PC-9 (cell line): ENCODE measurements at regions of chr11 and their contacts with region 1.

Region 1: DNA sequence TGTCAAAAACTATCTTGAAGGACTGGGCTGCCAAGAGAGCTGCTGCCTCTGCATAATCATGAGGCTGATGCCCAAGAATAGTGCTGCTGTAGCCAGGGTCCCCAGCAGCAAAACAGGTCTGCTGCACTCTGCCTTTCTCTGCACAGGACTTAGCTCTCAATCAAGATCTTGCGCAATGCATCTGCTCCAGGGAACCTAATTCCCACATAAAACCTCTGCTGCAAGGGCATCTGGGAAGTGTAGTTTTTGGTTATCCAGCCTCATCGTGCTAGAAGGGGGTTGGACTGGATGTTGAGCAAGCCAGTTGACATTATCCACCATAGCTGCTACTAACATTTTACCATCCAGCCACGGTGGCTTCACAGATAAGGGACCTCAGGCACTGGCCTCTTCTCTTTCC is 192.7 kb downstream of the C11orf91 start:
- DNase-seq: peak; percentile 2 to 50
- H3K4me3 ChIP-seq: no peak overlapping the region
- H3K27ac ChIP-seq: no peak overlapping the region
- H3K4me1 ChIP-seq: no peaks in the 10 kb centered on the region
- H3K27me3 ChIP-seq: no peaks in the 10 kb centered on the region
- CTCF ChIP-seq: no peak

Region 2: DNA sequence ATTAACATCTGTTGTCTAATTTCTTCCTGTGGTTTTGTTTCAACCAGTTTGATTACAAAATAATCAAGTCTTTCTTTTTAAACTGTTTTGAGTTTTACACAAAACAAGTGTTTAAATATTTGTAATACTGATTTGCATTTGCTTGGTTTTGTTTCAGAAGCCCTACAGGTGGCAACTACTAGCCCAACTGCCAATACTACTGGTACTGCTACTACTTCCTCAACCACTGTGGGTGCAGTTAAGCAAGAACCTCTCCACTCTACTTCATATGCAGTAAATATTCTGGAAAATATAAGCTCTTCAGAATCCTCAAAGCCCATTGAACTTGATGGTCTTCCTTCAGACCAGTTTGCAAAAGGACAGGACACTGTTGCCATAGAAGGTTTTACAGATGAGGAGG is 554.3 kb before region 1 on chr11:
- CTCF ChIA-PET with region 1: no interaction called
- POLR2A ChIA-PET with region 1: no interaction called
- intact Hi-C with region 1: no loop called
- DNase-seq: no peak
- H3K4me3 ChIP-seq: no peak overlapping the region
- H3K27ac ChIP-seq: no peak overlapping the region
- H3K4me1 ChIP-seq: no peaks in the 10 kb centered on the region
- H3K27me3 ChIP-seq: no peaks in the 10 kb centered on the region
- CTCF ChIP-seq: no peak

Region 3: DNA sequence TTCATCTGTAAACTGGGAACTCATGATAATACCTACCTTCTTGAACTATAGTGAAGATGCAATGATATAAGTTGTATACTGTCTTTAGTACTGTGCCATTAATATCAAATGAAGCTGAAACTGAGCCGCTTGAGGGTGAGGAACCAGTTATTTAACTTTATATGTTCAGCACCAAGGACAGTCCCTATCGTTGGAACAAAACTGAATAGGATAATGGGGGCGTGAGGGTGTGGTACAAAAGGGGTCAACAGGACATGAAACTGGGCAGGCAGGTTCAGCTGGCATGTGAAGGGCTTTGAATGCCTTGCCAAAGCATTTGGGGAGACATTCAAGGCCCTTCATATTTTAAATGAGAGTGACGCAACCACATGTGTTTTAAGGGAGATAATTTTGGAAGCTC is 80.1 kb after region 1 on chr11:
- CTCF ChIA-PET with region 1: no interaction called
- POLR2A ChIA-PET with region 1: no interaction called
- intact Hi-C with region 1: no loop called
- DNase-seq: no peak
- H3K4me3 ChIP-seq: no peak overlapping the region
- H3K27ac ChIP-seq: no peak overlapping the region
- H3K4me1 ChIP-seq: no peaks in the 10 kb centered on the region
- H3K27me3 ChIP-seq: no peaks in the 10 kb centered on the region
- CTCF ChIP-seq: no peak

Region 4: DNA sequence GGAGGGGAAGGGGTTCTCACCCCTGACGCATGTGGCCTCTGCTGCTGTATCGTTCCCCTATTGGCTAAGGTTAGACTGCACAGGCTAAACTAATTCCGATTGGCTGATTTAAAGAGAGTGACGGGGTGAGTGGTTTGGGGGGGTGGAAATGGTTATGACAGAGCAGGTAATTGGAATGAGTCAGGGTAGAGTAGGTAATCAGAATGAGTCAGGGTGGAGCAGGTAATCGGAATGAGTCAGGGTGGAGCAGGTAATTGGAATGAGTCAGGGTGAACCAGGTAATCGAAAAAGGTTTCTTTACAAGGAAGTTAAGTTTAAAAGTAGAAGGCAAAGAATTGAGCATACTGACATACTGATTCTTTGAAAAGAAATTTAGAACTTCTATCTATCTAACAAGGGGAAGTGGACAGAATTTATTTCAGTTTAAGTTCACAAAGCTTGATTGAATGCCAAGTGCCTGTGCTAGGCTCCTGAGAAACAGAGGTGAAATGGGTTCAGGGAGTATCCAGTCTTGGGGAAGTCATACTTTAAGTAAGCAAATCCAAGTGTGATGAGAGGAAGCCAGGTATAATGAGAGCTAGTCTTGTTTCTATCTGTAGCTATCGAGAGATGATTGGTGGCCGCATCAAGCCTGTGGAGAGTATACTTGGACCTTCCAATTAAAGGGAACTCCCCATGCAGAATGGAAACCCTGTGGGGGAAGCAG is 134.6 kb after region 1 on chr11:
- CTCF ChIA-PET with region 1: no interaction called
- POLR2A ChIA-PET with region 1: interaction called, 11 read pairs
- intact Hi-C with region 1: no loop called
- DNase-seq: peak in 1 of 2 experiments; percentile 63
- H3K4me3 ChIP-seq: no peak overlapping the region
- H3K27ac ChIP-seq: peak overlapping the region; percentile 90
- H3K4me1 ChIP-seq: peaks cover 10% of the 10 kb centered on the region
- H3K27me3 ChIP-seq: no peaks in the 10 kb centered on the region
- CTCF ChIP-seq: no peak